Activated T-helper 1 cell treated with anti-CD3 and anti-CD28 coated beads, Interleukin-12 subunit alpha, Interleukin-12 subunit beta, Interleukin-2, Interleukin-4 antibody, amounts not matched to agents 30 ng/mL and 10 ng/mL and 1 ng/mL, durations not matched to agents 14 hours and 24 hours and 36 hours (primary cell): ENCODE measurements at regions of chr18 and their contacts with region 1.

Region 1: GRCh38 chr18:77132371-77133050 is at the start of gene MBP:
- DNase-seq: peak; percentile 65
- H3K4me3 Mint-ChIP-seq: peak within 1 kb of the TSS; percentile 100
- H3K27ac Mint-ChIP-seq: peak within 1 kb of the TSS; percentile 48
- H3K4me1 Mint-ChIP-seq: peaks cover 54% of the 10 kb centered on the region
- H3K27me3 Mint-ChIP-seq: no peaks in the 10 kb centered on the region
- total RNA-seq, gene MBP: 57.3 and 63.6 TPM in 2 replicates

Region 2: DNA sequence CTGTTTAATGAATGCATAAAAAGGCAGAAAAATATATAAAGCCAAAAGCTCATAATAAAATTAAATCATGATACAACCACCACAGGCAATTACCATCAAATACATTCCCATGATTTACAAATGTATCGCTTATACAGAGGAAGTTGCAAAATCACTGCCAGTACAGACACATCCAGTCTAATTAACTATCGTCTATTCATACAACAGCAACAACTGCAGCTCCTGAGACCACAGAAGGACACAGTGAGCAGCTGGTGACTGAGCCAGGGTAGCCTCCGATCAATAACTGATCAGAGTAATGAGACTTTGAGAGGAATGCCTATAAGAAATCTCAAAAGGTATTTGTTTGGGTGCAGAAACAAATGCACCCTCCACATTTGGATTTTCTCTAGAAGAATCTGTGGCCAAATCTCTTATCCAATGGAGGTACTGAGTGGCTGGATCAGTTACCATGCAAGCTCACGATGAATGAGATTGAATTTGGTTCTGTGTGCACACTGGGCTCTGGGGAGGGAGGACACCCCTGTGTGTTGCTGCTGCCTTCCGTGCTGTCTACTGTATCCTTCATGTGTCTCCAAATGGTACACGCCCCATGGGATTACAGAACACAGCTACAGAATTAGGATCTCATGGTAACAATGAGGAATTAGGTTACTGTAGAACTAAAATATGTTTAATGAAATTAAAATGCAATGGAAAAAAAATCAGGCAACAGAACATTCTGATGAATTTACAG is 119.5 kb before region 1 on chr18:
- intact Hi-C with region 1: no loop called
- DNase-seq: no peak
- H3K4me3 Mint-ChIP-seq: no peak overlapping the region
- H3K27ac Mint-ChIP-seq: no peak overlapping the region
- H3K4me1 Mint-ChIP-seq: no peaks in the 10 kb centered on the region
- H3K27me3 Mint-ChIP-seq: no peaks in the 10 kb centered on the region

Region 3: DNA sequence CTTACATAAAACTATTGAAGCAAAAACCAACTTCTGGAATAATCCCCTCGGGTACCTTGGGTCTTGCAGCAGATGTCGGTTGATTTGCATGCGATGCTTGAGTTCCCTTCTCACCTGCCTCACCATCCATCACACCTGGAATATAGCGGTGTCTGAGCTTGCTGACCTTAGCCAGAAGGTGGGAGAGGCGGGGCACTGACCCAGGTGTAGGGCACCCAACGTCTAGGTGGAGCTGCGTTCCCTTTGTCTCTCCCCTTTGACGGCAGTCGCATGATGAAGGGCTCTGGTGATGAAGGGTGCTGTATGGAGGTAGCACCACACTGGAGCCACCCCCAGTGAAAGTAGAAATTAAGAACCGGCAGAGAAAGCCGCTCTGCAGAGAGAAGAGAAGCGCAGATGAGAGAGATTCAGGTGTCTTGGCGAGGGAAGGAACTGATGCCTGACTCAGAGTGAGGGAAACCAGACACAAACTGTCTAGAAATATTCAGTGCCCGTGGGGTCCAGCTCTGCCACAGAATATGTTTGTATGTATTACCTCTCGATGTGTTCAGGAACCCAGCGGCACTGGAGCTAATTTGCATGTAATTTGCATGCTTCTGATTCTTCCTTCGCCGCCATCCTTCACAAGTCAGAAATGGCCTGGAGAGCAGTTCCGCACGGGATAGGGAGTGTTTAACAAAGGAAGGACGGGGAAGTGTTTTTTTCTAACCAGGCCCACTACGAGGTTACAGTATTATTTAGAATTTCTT is 19.4 kb after region 1 on chr18:
- intact Hi-C with region 1: loop called (anchors 2 kb)
- DNase-seq: no peak
- H3K4me3 Mint-ChIP-seq: no peak overlapping the region
- H3K27ac Mint-ChIP-seq: no peak overlapping the region
- H3K4me1 Mint-ChIP-seq: peaks cover 18% of the 10 kb centered on the region
- H3K27me3 Mint-ChIP-seq: peaks cover 6% of the 10 kb centered on the region

Region 4: GRCh38 chr18:77165503-77166188 is 33.1 kb after region 1 on chr18:
- intact Hi-C with region 1: no loop called
- DNase-seq: no peak
- H3K4me3 Mint-ChIP-seq: no peak overlapping the region
- H3K27ac Mint-ChIP-seq: no peak overlapping the region
- H3K4me1 Mint-ChIP-seq: peaks cover 3% of the 10 kb centered on the region
- H3K27me3 Mint-ChIP-seq: peaks cover 7% of the 10 kb centered on the region

Region 5: DNA sequence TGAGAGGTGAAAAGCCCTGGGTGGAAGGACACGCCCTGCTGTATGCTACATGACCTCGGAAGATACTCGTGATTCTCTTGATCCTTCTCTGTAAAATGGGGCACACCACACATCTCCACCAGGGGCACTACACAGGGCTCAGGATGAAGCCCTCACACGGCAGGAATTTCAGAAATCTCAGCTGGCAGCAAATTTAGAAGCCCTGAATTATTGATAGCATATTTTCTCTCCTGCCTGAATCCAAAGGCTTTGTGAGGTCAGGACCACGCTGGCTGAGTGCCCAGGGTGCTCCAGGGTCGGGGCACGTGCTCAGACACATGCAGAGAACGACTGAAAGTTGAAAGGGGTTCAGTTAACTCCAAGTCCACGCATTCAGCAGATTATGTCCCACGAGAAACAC is 75.0 kb after region 1 on chr18:
- intact Hi-C with region 1: loop called (anchors 2 kb)
- DNase-seq: no peak
- H3K4me3 Mint-ChIP-seq: peak overlapping the region; percentile 28
- H3K27ac Mint-ChIP-seq: no peak overlapping the region
- H3K4me1 Mint-ChIP-seq: peaks cover 45% of the 10 kb centered on the region
- H3K27me3 Mint-ChIP-seq: no peaks in the 10 kb centered on the region

Region 6: DNA sequence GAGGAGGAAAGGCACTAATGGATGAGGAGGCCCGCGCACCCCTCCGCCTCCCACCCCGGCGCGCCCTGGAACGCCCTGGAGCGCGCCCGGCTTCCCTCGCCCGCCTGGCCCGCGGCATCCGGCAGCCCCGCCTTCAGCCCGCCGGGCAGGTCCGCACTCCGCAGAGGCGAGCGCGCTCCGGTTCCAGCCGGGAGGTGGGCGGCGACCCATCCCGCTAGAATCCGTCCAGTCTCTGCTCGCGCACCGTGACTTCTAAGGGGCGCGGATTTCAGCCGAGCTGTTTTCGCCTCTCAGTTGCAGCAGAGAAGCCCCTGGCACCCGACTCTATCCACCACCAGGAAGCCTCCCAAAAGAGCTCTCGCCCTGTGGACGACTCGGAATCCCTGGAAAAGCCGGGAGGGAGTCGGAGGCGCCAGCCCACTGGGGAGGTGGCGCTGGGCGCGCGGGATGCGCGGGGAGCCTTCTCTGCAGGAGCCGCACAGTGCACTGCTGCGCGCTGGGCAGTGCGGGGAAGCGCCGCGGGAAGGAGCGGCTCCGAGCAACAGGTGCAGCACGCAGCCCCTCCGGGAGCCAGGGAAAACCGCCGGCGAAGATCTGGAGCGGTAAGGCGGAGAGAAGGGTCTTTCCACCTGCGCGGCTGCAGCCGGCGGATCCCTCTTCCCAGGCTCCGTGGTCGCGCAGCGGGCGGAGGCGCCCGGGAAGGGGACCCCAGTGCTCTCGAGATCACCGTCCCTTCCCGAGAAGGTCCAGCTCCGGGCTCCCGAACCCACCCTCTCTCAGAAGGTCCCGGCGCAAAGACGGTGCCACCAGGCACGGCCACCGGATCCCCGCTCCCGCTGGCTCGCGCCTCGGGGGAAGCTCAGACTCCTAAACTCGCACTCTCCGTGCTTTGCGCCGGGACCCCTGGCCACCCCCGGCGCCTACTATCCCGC is 117.3 kb after region 1 on chr18 and contains the start of gene GALR1:
- intact Hi-C with region 1: no loop called
- DNase-seq: no peak
- H3K4me3 Mint-ChIP-seq: peak within 1 kb of the TSS; percentile 17
- H3K27ac Mint-ChIP-seq: peak within 1 kb of the TSS; percentile 14
- H3K4me1 Mint-ChIP-seq: peaks cover 12% of the 10 kb centered on the region
- H3K27me3 Mint-ChIP-seq: peaks cover 57% of the 10 kb centered on the region
- total RNA-seq, gene GALR1: not detected in 2 replicates

Region 7: GRCh38 chr18:77442393-77442792 is 309.9 kb after region 1 on chr18:
- intact Hi-C with region 1: no loop called
- DNase-seq: no peak
- H3K4me3 Mint-ChIP-seq: no peak overlapping the region
- H3K27ac Mint-ChIP-seq: no peak overlapping the region
- H3K4me1 Mint-ChIP-seq: no peaks in the 10 kb centered on the region
- H3K27me3 Mint-ChIP-seq: peaks cover 5% of the 10 kb centered on the region